PC-9 (cell line): ENCODE measurements at regions of chr10 and their contacts with region 1.

Region 1: DNA sequence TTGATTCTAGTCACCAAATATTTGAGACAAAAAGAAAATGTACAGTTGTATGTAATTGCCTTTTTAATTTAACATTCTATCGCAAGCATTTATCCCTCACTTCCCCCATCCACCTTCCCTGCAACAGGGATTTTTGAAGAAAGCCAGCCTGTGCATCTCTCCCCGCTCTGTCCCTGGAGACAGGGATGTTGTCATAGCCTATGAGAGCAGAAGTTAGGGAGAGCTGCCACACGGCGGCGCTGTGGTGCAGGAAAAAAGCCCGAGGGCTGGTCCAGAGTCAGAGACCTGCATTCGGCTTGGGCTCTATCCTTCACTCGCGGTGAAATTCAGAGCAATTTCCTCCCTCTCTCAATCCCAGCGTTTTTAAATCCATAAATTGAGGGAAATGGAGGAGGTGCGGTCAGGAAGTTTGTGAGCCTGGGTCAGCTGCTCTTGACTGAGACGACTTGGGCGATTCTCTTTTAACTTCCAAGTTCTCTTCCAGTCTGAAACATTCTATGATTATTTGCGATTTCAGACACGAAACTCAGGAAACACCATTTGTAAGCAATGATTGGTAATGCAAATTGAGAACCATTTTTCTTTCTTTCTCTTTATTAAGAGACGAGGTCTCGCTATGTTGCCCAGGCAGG is 17.5 kb downstream of the HKDC1 start:
- DNase-seq: peak; percentile 62 to 90
- H3K4me3 ChIP-seq: no peak overlapping the region
- H3K27ac ChIP-seq: peak overlapping the region; percentile 37; the same call in 1 of the 2 replicates
- H3K4me1 ChIP-seq: peaks cover 28% of the 10 kb centered on the region
- H3K27me3 ChIP-seq: no peaks in the 10 kb centered on the region
- CTCF ChIP-seq: peak; percentile 98

Region 2: GRCh38 chr10:68963151-68963550 is 274.5 kb before region 1 on chr10:
- CTCF ChIA-PET with region 1: no interaction called
- POLR2A ChIA-PET with region 1: interaction called, 13 read pairs
- intact Hi-C with region 1: no loop called
- DNase-seq: no peak
- H3K4me3 ChIP-seq: no peak overlapping the region
- H3K27ac ChIP-seq: no peak overlapping the region
- H3K4me1 ChIP-seq: peaks cover 16% of the 10 kb centered on the region
- H3K27me3 ChIP-seq: no peaks in the 10 kb centered on the region
- CTCF ChIP-seq: no peak

Region 3: DNA sequence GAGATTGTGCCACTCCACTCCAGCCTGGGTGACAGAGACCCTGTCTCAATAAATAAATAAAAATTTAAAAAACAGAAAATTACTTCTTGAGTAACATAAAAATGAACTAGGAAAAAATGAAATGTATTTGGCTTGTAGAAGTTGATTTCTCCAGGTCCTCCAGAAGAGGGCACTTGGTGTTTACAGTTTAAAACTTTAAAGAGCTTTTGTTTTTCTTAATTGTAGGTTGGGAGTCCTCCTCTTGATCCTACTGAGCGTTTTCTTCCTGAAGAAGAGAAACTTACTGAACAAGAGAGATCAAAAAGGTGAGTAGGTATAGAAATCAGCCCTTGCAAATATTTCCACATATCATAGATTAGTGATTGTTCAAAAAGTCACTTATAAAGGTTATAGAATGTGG is 232.8 kb before region 1 on chr10:
- CTCF ChIA-PET with region 1: interaction called, 5 read pairs
- POLR2A ChIA-PET with region 1: no interaction called
- intact Hi-C with region 1: loop called (anchors 5 kb)
- DNase-seq: peak in 1 of 2 experiments; percentile 56
- H3K4me3 ChIP-seq: no peak overlapping the region
- H3K27ac ChIP-seq: no peak overlapping the region
- H3K4me1 ChIP-seq: no peaks in the 10 kb centered on the region
- H3K27me3 ChIP-seq: no peaks in the 10 kb centered on the region
- CTCF ChIP-seq: peak; percentile 84

Region 4: GRCh38 chr10:69107699-69108098 is 129.9 kb before region 1 on chr10:
- CTCF ChIA-PET with region 1: interaction called, 20 read pairs
- POLR2A ChIA-PET with region 1: no interaction called
- intact Hi-C with region 1: no loop called
- DNase-seq: no peak
- H3K4me3 ChIP-seq: no peak overlapping the region
- H3K27ac ChIP-seq: no peak overlapping the region
- H3K4me1 ChIP-seq: no peaks in the 10 kb centered on the region
- H3K27me3 ChIP-seq: no peaks in the 10 kb centered on the region
- CTCF ChIP-seq: no peak

Region 5: GRCh38 chr10:69130251-69130650 is 107.4 kb before region 1 on chr10:
- CTCF ChIA-PET with region 1: no interaction called
- POLR2A ChIA-PET with region 1: interaction called, 10 read pairs
- intact Hi-C with region 1: loop called (anchors 2 kb)
- DNase-seq: no peak
- H3K4me3 ChIP-seq: no peak overlapping the region
- H3K27ac ChIP-seq: 0 out of 2 replicates have a peak overlapping the region, but pooled peaks have one; percentile 5
- H3K4me1 ChIP-seq: peaks cover 14% of the 10 kb centered on the region
- H3K27me3 ChIP-seq: no peaks in the 10 kb centered on the region
- CTCF ChIP-seq: no peak

Region 6: DNA sequence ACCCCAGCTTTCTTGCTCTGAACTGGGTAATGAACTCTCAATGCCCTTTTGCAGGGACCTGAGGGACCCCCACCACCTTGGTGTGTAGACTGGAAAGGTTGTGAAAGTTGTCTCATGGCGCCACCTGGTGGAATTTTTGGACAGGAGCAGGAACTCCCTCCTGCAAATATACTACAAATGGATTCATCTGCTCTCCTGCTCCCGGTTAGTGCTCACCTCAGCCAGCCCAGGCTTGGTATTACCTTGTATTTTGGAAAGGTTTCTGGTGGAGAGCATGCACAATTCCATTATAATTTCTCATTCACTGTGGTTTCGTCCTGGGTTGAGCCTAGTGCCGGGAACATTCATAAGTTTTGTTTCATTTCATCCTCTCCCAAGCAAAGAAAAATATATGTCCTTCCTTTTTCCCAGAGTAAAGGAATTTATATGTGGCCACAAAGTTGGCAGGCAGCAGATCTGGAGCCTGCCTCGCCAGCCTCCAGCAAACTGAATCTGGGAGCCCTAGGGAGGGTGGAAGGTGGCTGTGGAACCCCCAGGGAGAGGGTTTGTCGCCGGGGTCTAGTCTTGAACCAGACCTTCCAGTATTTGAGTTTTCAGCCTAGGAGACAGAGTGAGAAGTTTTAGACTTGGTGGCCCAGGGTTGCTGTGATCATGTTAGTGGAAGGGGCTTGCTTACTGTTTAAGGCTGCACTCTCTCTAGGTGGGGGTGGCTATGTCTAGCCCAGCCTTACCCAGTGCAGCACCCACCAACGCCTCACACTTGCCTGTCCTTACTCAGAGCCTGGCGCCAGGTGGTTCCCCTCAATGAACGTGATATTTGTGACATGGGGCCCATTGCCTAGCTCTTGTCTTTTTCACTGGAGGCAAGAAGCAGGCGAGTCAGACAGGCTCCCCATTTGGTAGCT is 401.9 kb after region 1 on chr10:
- CTCF ChIA-PET with region 1: no interaction called
- POLR2A ChIA-PET with region 1: no interaction called
- intact Hi-C with region 1: loop called (anchors 2 kb)
- DNase-seq: peak; percentile 46 to 62
- H3K4me3 ChIP-seq: no peak overlapping the region
- H3K27ac ChIP-seq: no peak overlapping the region
- H3K4me1 ChIP-seq: peaks cover 10% of the 10 kb centered on the region
- H3K27me3 ChIP-seq: peaks cover 14% of the 10 kb centered on the region; the same call in 1 of the 2 replicates
- CTCF ChIP-seq: peak; percentile 98